ENCODE measurements at regions of chr9 and their contacts with region 1.

Region 1: DNA sequence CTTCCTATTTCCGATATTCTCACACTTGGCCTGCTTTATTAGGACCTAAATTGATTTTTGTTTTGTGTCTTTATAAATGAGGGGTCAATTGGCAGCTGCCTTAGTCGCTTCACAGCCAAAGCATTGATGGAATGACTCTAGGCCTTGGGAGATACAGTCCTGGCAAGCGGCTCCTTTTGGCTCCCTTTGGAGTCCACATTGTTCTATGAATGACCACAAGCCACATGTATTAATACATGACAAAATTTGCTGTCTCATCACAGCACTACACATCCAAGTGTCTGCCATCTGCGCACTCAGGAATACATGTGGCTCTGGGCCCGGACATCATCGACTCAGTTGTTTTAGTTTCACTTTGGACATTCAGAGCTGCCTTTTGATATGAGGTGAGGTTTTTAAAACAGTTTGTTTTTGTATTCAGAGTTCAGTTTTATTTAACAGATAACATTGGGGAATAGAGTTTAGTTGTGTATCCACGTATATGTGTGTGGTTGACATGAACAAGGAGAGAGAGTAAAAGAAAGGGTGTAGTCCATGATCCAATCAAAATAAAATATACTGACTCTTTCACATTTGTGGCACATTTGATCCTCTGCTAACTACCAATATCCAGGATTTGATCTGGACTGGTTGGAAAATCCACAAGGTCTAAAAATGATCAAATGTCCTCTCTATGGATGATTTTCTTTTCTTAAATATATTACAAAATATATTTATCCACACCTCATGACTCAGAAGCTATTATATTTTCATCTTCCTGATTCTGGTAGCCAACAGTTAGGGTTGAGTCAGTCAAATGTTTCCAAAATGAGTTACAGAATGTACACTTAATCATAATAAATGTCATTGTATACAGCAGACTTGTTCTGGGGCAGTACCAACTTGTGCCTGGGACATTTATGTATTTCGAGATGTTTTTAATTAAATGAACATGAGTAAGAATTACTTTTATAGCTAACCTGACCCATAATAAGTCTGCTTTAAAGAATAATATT is 114.0 kb upstream of the MTAP start:
- DNase-seq: peak in 1 of 2 experiments; percentile 73
- H3K4me3 ChIP-seq: no peak overlapping the region
- H3K27ac ChIP-seq: peak overlapping the region; percentile 63
- H3K4me1 ChIP-seq: peaks cover 61% of the 10 kb centered on the region
- H3K27me3 ChIP-seq: no peaks in the 10 kb centered on the region
- CTCF ChIP-seq: no peak

Region 2: GRCh38 chr9:21334701-21335632 is 353.4 kb before region 1 on chr9 and contains the start of gene KLHL9:
- CTCF ChIA-PET with region 1: no interaction called
- POLR2A ChIA-PET with region 1: no interaction called
- intact Hi-C with region 1: loop called (anchors 5 kb)
- DNase-seq: peak; percentile 65 to 81
- H3K4me3 ChIP-seq: peak within 1 kb of the TSS; percentile 92
- H3K27ac ChIP-seq: peak within 1 kb of the TSS; percentile 94
- H3K4me1 ChIP-seq: peaks cover 20% of the 10 kb centered on the region; the same call in 1 of the 2 replicates
- H3K27me3 ChIP-seq: no peaks in the 10 kb centered on the region
- CTCF ChIP-seq: no peak
- total RNA-seq, gene KLHL9: 9.1 and 10.5 TPM in 2 replicates

Region 3: GRCh38 chr9:21502586-21502985 is 185.8 kb before region 1 on chr9:
- CTCF ChIA-PET with region 1: no interaction called
- POLR2A ChIA-PET with region 1: no interaction called
- intact Hi-C with region 1: no loop called
- DNase-seq: no peak
- H3K4me3 ChIP-seq: no peak overlapping the region
- H3K27ac ChIP-seq: no peak overlapping the region
- H3K4me1 ChIP-seq: peaks cover 11% of the 10 kb centered on the region
- H3K27me3 ChIP-seq: no peaks in the 10 kb centered on the region
- CTCF ChIP-seq: no peak

Region 4: GRCh38 chr9:21559424-21560280 is 128.8 kb before region 1 on chr9:
- CTCF ChIA-PET with region 1: no interaction called
- POLR2A ChIA-PET with region 1: interaction called, 3 read pairs
- intact Hi-C with region 1: loop called (anchors 5 kb)
- DNase-seq: peak; percentile 68 to 83
- H3K4me3 ChIP-seq: peak overlapping the region; percentile 80
- H3K27ac ChIP-seq: peak overlapping the region; percentile 77
- H3K4me1 ChIP-seq: peaks cover 9% of the 10 kb centered on the region; the same call in 1 of the 2 replicates
- H3K27me3 ChIP-seq: no peaks in the 10 kb centered on the region
- CTCF ChIP-seq: no peak

Region 5: DNA sequence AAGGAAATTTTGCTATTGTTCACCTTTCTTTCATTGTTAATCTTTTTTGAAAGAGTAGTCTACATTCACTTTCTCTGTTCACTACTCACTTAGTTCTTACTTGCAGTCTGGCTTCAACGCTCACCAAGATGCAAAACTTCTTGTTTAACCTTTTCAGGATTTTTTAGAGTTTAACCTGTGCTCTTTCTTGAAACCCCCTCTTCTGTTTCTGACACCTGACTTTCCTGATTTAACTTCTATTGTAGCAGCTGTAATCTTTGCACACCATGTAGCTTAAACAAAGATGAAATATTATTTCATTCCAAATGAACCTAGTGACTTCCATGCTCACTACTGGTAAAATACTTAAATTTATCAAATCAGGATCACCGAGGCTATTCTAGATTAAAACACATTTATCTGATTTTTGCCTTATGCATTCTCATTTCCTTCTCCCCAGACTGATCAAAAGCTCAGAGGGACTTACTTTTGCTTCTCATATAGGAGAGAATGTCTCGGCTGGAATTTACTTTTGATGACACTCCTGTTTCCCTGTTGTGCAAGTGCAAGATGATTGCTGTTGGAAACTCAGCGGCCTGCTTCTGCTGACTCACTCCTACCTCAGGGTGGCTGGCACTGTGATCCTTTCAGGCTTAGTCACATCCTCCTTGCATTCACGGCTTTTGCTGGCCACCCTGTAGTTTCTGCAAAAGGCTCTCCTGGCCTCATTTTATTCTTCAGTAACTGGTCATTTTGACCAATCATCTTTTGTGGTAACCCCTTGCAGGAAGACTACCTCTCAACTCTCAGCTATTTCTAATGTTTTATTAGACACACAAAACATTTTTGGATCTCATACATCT is 97.0 kb before region 1 on chr9:
- CTCF ChIA-PET with region 1: no interaction called
- POLR2A ChIA-PET with region 1: interaction called, 14 read pairs
- intact Hi-C with region 1: loop called (anchors 1 kb)
- DNase-seq: peak; percentile 80 to 88
- H3K4me3 ChIP-seq: peak overlapping the region; percentile 50
- H3K27ac ChIP-seq: peak overlapping the region; percentile 98
- H3K4me1 ChIP-seq: peaks cover 32% of the 10 kb centered on the region
- H3K27me3 ChIP-seq: no peaks in the 10 kb centered on the region
- CTCF ChIP-seq: no peak

Region 6: DNA sequence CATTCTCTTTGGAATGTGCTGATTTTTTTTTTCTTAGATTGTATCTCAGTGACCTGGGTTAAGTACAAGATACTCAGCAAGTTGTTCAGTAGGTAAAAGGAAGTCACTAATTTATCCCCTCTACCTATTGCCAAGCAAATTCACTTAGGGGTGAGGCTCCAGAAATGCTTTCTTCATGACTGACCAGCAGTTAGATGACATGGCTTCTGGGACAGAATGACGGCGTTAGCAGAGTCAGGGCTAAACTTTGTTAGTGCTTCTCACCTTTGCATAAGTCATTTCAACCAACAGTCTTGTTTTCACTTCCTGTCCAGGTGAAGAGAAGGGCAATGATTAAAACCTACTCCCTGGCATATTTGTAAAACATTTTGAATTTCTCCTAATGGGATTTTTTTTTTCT is 93.8 kb after region 1 on chr9:
- CTCF ChIA-PET with region 1: no interaction called
- POLR2A ChIA-PET with region 1: interaction called, 7 read pairs
- intact Hi-C with region 1: loop called (anchors 1 kb)
- DNase-seq: peak; percentile 50 to 94
- H3K4me3 ChIP-seq: no peak overlapping the region
- H3K27ac ChIP-seq: peak overlapping the region; percentile 93
- H3K4me1 ChIP-seq: peaks cover 46% of the 10 kb centered on the region
- H3K27me3 ChIP-seq: no peaks in the 10 kb centered on the region
- CTCF ChIP-seq: no peak